Gastrocnemius medialis (tissue), 4 donors: ENCODE measurements at regions of chr1 and their contacts with region 1.

Region 1: DNA sequence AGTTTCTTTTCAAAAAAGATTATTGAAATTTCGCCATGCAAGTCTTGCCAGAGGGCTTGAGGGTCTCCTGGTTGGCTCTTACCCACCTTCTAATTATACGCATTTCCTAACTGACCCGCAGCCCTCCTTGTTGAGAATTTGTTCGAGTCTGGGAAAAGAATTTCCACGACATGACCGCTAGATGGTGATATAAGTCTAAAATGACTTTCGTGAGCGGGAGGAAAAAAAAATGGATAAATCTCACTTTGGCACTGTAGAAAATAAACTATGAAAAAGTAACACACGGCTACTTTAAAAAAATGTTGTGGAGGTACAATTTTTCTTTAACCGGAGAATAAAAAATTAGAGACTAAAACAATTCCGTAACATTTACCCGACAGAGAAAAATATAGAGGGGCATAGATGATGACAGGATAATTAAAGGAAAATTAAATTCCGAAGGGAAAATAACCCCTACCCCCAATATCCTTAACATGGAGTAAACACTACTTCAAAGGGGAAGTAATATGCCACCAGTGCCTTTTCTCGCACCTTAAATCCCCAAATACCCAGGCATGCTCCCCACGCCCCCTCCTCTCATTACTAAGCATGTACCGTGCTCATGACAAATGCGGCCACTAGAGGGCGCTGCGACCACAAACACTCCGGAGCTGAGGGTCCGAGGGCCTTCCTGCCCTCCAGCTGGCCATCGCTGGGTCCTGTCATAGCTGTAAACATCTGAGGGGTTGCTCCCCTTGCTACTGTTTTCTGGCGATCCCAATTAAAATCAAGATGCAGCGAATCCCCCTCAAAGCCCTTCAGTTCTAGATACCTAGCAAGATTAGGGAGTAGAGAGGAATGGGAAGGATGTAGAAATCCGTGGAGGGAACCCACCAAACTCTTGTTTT is 266.9 kb downstream of the ASTN1 start:
- DNase-seq: peak in 1 of 2 donors; percentile 18
- ATAC-seq: peak; percentile 54 to 76
- H3K4me3 ChIP-seq: peak overlapping the region in 3 of 4 donors; percentile 19 to 45 (median 36)
- H3K27ac ChIP-seq: no peak overlapping the region
- H3K4me1 ChIP-seq: no peaks in the 10 kb centered on the region
- H3K27me3 ChIP-seq: peaks cover 0 to 17% (median 3%) of the 10 kb centered on the region in 3 donors
- CTCF ChIP-seq: peak; percentile 36 to 78 (median 55)
- POLR2A ChIP-seq: no peak

Region 2: DNA sequence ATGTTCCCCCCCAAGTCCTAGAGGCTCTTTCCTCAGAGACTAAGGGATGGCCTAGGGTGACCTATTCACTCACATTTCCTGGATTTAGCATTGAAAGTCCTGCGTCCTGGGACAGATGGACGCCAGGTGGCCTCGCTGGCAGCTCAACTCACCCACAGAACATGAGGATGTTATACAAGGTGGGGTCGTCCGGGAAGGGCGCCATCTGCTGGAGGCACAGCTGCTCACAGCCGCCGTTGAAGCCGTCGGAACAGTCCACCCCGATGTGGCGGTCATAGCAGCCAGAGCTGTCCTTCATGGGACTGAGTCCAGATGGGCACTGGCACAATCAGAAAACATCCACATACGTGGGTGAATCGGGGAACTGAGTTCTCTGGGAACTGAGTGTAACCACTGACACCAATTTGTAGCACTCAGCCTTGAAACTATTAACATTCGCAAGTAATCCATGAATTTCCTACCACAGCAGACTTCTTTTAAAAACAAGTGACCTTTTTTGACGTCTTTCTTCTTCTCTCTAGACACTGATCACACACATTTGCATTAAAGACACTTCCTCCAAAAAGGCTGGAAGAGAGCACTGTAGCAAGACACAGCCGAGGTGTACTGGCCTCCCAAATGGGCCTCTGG is 51.6 kb after region 1 on chr1:
- in situ Hi-C with region 1: no loop called
- intact Hi-C with region 1: loop called (anchors 2 kb)
- DNase-seq: peak in 1 of 2 donors; percentile 25
- ATAC-seq: no peak
- H3K4me3 ChIP-seq: no peak overlapping the region
- H3K27ac ChIP-seq: no peak overlapping the region
- H3K4me1 ChIP-seq: no peaks in the 10 kb centered on the region
- H3K27me3 ChIP-seq: no peaks in the 10 kb centered on the region
- CTCF ChIP-seq: peak; percentile 19 to 55 (median 39)
- POLR2A ChIP-seq: no peak

Region 3: GRCh38 chr1:177020851-177021589 is 123.4 kb after region 1 on chr1:
- in situ Hi-C with region 1: no loop called
- intact Hi-C with region 1: no loop called
- DNase-seq: no peak
- ATAC-seq: no peak
- H3K4me3 ChIP-seq: no peak overlapping the region
- H3K27ac ChIP-seq: no peak overlapping the region
- H3K4me1 ChIP-seq: no peaks in the 10 kb centered on the region
- H3K27me3 ChIP-seq: no peaks in the 10 kb centered on the region
- CTCF ChIP-seq: no peak
- POLR2A ChIP-seq: no peak

Region 4: GRCh38 chr1:177181631-177182291 is 284.2 kb after region 1 on chr1:
- in situ Hi-C with region 1: loop called in 3 of 4 experiments (anchors 5 to 25 kb)
- intact Hi-C with region 1: loop called (anchors 5 kb)
- DNase-seq: peak in 1 of 2 donors; percentile 18
- ATAC-seq: peak; percentile 74 to 75
- H3K4me3 ChIP-seq: peak overlapping the region; percentile 14 to 42 (median 29)
- H3K27ac ChIP-seq: no peak overlapping the region
- H3K4me1 ChIP-seq: no peaks in the 10 kb centered on the region
- H3K27me3 ChIP-seq: peaks cover 0 to 13% (median 5%) of the 10 kb centered on the region in 3 donors
- CTCF ChIP-seq: peak; percentile 31 to 82 (median 68)
- POLR2A ChIP-seq: no peak